Caco-2 (cell line): ENCODE measurements at regions of chr11 and their contacts with region 1.

Region 1: GRCh38 chr11:9015677-9016076 is 11.9 kb upstream of the NRIP3 start:
- DNase-seq: peak; percentile 74
- H3K4me3 ChIP-seq: no peak overlapping the region
- H3K4me3 Mint-ChIP-seq: no peak overlapping the region
- H3K27ac Mint-ChIP-seq: no peak overlapping the region
- H3K4me1 ChIP-seq: no peaks in the 10 kb centered on the region
- H3K4me1 Mint-ChIP-seq: no peaks in the 10 kb centered on the region
- H3K27me3 ChIP-seq: no peaks in the 10 kb centered on the region
- H3K27me3 Mint-ChIP-seq: peaks cover 2% of the 10 kb centered on the region
- CTCF ChIP-seq: peak; percentile 72 to 88

Region 2: DNA sequence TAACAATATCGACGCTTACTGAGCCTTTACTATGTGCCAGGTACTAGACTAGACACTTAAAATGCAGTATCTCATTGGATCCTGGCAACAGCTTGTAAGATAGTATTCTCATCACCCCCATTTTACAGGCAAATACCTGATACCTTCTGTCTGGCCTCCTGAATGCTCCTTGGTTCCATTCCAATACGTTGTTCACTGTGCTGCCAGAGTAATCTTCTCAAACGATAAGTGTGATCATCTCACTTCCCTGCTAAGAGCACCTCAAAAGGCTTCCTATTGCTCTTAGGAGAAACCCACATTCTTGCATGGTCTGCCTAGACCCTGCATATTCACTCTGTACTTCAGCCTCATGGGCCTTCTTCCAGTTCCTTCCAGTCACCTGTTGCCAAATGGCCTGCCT is 10.6 kb before region 1 on chr11:
- CTCF ChIA-PET with region 1: interaction called, 11 read pairs
- POLR2A ChIA-PET with region 1: no interaction called
- intact Hi-C with region 1: no loop called
- DNase-seq: no peak
- H3K4me3 ChIP-seq: no peak overlapping the region
- H3K4me3 Mint-ChIP-seq: peak overlapping the region; percentile 65
- H3K27ac Mint-ChIP-seq: no peak overlapping the region
- H3K4me1 ChIP-seq: peaks cover 11% of the 10 kb centered on the region; the same call in 1 of the 2 replicates
- H3K4me1 Mint-ChIP-seq: no peaks in the 10 kb centered on the region
- H3K27me3 ChIP-seq: no peaks in the 10 kb centered on the region; the same call in 1 of the 2 replicates
- H3K27me3 Mint-ChIP-seq: peaks cover 6% of the 10 kb centered on the region
- CTCF ChIP-seq: no peak

Region 3: GRCh38 chr11:9030601-9031000 is 14.9 kb after region 1 on chr11:
- CTCF ChIA-PET with region 1: no interaction called
- POLR2A ChIA-PET with region 1: no interaction called
- intact Hi-C with region 1: no loop called
- DNase-seq: no peak
- H3K4me3 ChIP-seq: no peak overlapping the region
- H3K4me3 Mint-ChIP-seq: no peak overlapping the region
- H3K27ac Mint-ChIP-seq: no peak overlapping the region
- H3K4me1 ChIP-seq: no peaks in the 10 kb centered on the region
- H3K4me1 Mint-ChIP-seq: no peaks in the 10 kb centered on the region
- H3K27me3 ChIP-seq: no peaks in the 10 kb centered on the region
- H3K27me3 Mint-ChIP-seq: no peaks in the 10 kb centered on the region
- CTCF ChIP-seq: no peak

Region 4: GRCh38 chr11:9066433-9066925 is 50.8 kb after region 1 on chr11:
- CTCF ChIA-PET with region 1: interaction called, 3 read pairs
- POLR2A ChIA-PET with region 1: no interaction called
- intact Hi-C with region 1: loop called (anchors 5 kb)
- DNase-seq: no peak
- H3K4me3 ChIP-seq: no peak overlapping the region
- H3K4me3 Mint-ChIP-seq: no peak overlapping the region
- H3K27ac Mint-ChIP-seq: peak overlapping the region; percentile 24
- H3K4me1 ChIP-seq: peaks cover 26% of the 10 kb centered on the region
- H3K4me1 Mint-ChIP-seq: peaks cover 33% of the 10 kb centered on the region
- H3K27me3 ChIP-seq: no peaks in the 10 kb centered on the region
- H3K27me3 Mint-ChIP-seq: no peaks in the 10 kb centered on the region
- CTCF ChIP-seq: no peak

Region 5: DNA sequence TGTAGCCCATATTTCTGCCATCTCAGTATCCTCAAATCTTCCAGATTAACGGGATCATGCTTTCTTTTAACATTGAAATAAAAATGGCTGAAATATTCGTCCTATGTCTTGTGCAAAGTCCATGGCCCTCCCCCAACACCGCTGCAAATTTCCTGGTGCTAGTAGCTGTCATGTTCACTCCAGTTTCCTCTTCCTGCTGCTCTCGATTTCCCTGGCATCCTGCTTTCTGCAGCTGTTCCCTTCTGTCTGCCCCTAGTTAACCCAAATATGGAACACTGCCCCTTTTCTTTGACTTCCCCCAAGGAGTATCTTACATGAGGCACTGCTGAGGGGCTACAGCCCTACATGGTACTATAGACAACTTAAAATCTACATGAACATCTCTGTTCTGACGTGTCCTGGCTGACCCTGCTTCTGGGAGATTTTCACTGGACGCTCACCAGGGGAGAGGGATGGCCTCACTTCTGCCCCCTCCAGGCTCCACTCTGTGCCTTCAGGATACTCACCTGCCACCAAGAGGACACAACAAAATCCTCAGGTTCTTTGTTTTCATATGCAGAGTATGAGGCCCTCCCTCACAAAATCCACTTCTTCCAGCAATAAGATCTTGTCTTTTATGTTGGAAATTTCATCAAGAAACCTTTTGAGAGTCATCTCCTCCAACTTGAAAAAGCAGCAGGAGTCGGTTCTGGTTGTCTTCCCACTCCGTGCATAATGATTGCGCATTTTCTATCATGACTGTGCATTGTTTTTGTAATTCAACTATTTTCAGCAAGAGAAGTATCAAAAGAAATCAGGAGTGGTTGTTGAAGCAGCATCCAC is 105.2 kb after region 1 on chr11:
- CTCF ChIA-PET with region 1: interaction called, 5 read pairs
- POLR2A ChIA-PET with region 1: no interaction called
- intact Hi-C with region 1: loop called (anchors 1 kb)
- DNase-seq: peak in 1 of 2 experiments; percentile 56
- H3K4me3 ChIP-seq: no peak overlapping the region
- H3K4me3 Mint-ChIP-seq: no peak overlapping the region
- H3K27ac Mint-ChIP-seq: no peak overlapping the region
- H3K4me1 ChIP-seq: no peaks in the 10 kb centered on the region
- H3K4me1 Mint-ChIP-seq: peaks cover 6% of the 10 kb centered on the region
- H3K27me3 ChIP-seq: no peaks in the 10 kb centered on the region
- H3K27me3 Mint-ChIP-seq: no peaks in the 10 kb centered on the region
- CTCF ChIP-seq: peak; percentile 40 to 76

Region 6: DNA sequence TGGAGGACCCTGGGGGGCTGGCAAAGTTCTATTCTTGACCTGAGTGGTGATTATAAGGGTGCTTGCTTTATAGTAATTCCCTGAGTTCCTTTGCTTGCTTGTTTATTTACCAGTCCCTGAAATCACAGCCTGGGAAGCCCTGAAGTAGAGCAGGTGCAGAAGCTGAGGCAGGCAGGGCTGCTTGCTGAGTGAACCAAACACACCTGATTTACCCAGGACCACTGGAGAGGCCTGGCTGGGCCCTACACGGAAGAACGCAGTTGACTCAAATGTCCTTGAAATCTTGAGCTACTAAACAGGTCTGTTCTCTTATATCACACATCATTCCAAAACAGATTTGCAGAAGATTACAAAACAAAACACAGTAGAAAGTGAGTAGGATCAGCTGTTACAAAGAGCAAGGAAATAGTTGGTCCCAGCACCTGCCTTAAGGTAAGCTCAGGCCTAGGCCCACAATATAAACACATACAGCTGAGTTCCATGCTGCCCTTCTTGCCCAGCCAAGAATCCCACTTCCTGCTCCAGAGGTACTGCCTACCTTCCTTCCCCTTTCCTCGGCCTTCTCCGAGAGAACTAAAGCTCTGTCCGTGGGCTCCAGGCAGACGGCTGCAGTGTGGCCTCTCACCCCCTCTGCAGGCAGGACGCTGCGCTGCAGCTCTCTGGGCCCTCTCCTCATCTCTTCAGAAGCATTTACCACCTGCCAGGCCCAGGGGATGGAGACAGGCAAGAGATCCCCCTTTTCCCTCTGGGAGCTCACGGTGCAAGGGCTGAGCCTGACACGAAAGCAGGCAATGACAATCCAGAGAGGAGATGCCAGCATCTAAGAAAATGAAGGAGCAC is 121.8 kb after region 1 on chr11:
- CTCF ChIA-PET with region 1: interaction called, 110 read pairs
- POLR2A ChIA-PET with region 1: no interaction called
- intact Hi-C with region 1: loop called (anchors 1 kb)
- DNase-seq: peak; percentile 77 to 85
- H3K4me3 ChIP-seq: no peak overlapping the region
- H3K4me3 Mint-ChIP-seq: no peak overlapping the region
- H3K27ac Mint-ChIP-seq: peak overlapping the region; percentile 62
- H3K4me1 ChIP-seq: no peaks in the 10 kb centered on the region
- H3K4me1 Mint-ChIP-seq: no peaks in the 10 kb centered on the region
- H3K27me3 ChIP-seq: no peaks in the 10 kb centered on the region
- H3K27me3 Mint-ChIP-seq: no peaks in the 10 kb centered on the region
- CTCF ChIP-seq: peak; percentile 95 to 99

Region 7: DNA sequence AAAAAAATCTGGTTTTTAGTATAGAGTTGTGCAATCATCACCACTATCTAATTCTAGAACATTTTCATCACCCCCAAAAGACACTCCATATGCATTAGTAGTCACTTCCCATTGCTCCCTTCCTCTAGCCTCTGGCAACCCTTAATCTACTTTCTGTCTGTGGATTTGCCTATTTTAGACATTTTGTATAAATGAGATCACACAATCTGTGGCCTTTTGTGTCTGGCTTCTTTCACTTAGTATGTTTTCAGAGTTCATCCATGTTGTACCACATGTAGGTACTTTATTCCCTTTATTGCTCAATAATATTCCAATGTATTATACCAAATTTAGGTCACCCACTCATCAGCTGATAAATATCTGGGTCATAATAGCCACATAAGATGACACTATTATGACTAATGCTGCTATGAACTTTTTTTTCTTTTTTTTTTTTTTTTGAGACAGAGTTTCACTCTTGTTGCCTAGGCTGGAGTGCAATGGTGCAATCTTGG is 143.3 kb after region 1 on chr11:
- CTCF ChIA-PET with region 1: no interaction called
- POLR2A ChIA-PET with region 1: no interaction called
- intact Hi-C with region 1: no loop called
- DNase-seq: no peak
- H3K4me3 ChIP-seq: no peak overlapping the region
- H3K4me3 Mint-ChIP-seq: no peak overlapping the region
- H3K27ac Mint-ChIP-seq: no peak overlapping the region
- H3K4me1 ChIP-seq: no peaks in the 10 kb centered on the region
- H3K4me1 Mint-ChIP-seq: no peaks in the 10 kb centered on the region
- H3K27me3 ChIP-seq: no peaks in the 10 kb centered on the region
- H3K27me3 Mint-ChIP-seq: no peaks in the 10 kb centered on the region
- CTCF ChIP-seq: no peak

Region 8: GRCh38 chr11:9231848-9232177 is 216.1 kb after region 1 on chr11:
- CTCF ChIA-PET with region 1: no interaction called
- POLR2A ChIA-PET with region 1: interaction called, 13 read pairs
- intact Hi-C with region 1: no loop called
- DNase-seq: no peak
- H3K4me3 ChIP-seq: no peak overlapping the region
- H3K4me3 Mint-ChIP-seq: no peak overlapping the region
- H3K27ac Mint-ChIP-seq: no peak overlapping the region
- H3K4me1 ChIP-seq: peaks cover 34% of the 10 kb centered on the region
- H3K4me1 Mint-ChIP-seq: peaks cover 28% of the 10 kb centered on the region
- H3K27me3 ChIP-seq: no peaks in the 10 kb centered on the region
- H3K27me3 Mint-ChIP-seq: no peaks in the 10 kb centered on the region
- CTCF ChIP-seq: no peak

Region 9: GRCh38 chr11:9265211-9266131 is 249.8 kb after region 1 on chr11 and contains the start of gene DENND5A:
- CTCF ChIA-PET with region 1: no interaction called
- POLR2A ChIA-PET with region 1: no interaction called
- intact Hi-C with region 1: loop called (anchors 5 kb)
- DNase-seq: peak; percentile 84 to 91
- H3K4me3 ChIP-seq: peak within 1 kb of the TSS; percentile 83
- H3K4me3 Mint-ChIP-seq: peak within 1 kb of the TSS; percentile 94
- H3K27ac Mint-ChIP-seq: peak within 1 kb of the TSS; percentile 95
- H3K4me1 ChIP-seq: peaks cover 30% of the 10 kb centered on the region
- H3K4me1 Mint-ChIP-seq: peaks cover 47% of the 10 kb centered on the region
- H3K27me3 ChIP-seq: no peaks in the 10 kb centered on the region
- H3K27me3 Mint-ChIP-seq: no peaks in the 10 kb centered on the region
- CTCF ChIP-seq: no peak
- total RNA-seq, gene DENND5A: 54.3 and 58.0 TPM in 2 replicates